Caco-2 (cell line): ENCODE measurements at regions of chr17 and their contacts with region 1.

Region 1: DNA sequence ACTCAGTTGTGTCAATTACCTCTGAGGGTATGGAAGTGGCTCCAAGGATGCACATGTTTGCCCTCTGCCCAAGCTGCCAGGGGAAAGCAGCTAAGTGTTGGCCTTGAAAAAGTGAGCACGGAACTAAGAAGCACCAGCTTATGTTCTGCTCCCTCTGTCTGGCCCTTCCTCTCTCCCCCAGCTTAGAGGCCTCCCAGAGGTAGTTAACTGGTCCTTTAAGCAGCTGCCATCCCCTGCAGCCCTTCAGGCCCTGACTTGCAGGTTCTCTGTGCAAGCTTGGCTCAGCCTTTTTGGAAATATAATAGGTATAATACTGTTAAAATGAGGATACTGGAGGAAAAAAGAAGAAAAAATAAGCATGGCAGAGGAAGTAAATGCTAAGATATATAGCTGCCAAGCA is 7.0 kb upstream of the UBE2Z start:
- DNase-seq: no peak
- H3K4me3 ChIP-seq: no peak overlapping the region
- H3K4me3 Mint-ChIP-seq: no peak overlapping the region
- H3K27ac Mint-ChIP-seq: no peak overlapping the region
- H3K4me1 ChIP-seq: peaks cover 3% of the 10 kb centered on the region
- H3K4me1 Mint-ChIP-seq: peaks cover 13% of the 10 kb centered on the region
- H3K27me3 ChIP-seq: no peaks in the 10 kb centered on the region
- H3K27me3 Mint-ChIP-seq: no peaks in the 10 kb centered on the region
- CTCF ChIP-seq: no peak

Region 2: GRCh38 chr17:48671697-48672171 is 229.5 kb before region 1 on chr17:
- CTCF ChIA-PET with region 1: interaction called, 10 read pairs
- POLR2A ChIA-PET with region 1: no interaction called
- intact Hi-C with region 1: no loop called
- DNase-seq: peak; percentile 86 to 94
- H3K4me3 ChIP-seq: peak overlapping the region; percentile 23
- H3K4me3 Mint-ChIP-seq: peak overlapping the region; percentile 58
- H3K27ac Mint-ChIP-seq: peak overlapping the region; percentile 11
- H3K4me1 ChIP-seq: no peaks in the 10 kb centered on the region
- H3K4me1 Mint-ChIP-seq: peaks cover 5% of the 10 kb centered on the region
- H3K27me3 ChIP-seq: no peaks in the 10 kb centered on the region
- H3K27me3 Mint-ChIP-seq: peaks cover 2% of the 10 kb centered on the region
- CTCF ChIP-seq: peak; percentile 99

Region 3: GRCh38 chr17:48928876-48929811 is 27.9 kb after region 1 on chr17:
- CTCF ChIA-PET with region 1: interaction called, 5 read pairs
- POLR2A ChIA-PET with region 1: interaction called, 14 read pairs
- intact Hi-C with region 1: no loop called
- DNase-seq: no peak
- H3K4me3 ChIP-seq: no peak overlapping the region
- H3K4me3 Mint-ChIP-seq: no peak overlapping the region
- H3K27ac Mint-ChIP-seq: no peak overlapping the region
- H3K4me1 ChIP-seq: no peaks in the 10 kb centered on the region
- H3K4me1 Mint-ChIP-seq: no peaks in the 10 kb centered on the region
- H3K27me3 ChIP-seq: no peaks in the 10 kb centered on the region
- H3K27me3 Mint-ChIP-seq: no peaks in the 10 kb centered on the region
- CTCF ChIP-seq: no peak

Region 4: DNA sequence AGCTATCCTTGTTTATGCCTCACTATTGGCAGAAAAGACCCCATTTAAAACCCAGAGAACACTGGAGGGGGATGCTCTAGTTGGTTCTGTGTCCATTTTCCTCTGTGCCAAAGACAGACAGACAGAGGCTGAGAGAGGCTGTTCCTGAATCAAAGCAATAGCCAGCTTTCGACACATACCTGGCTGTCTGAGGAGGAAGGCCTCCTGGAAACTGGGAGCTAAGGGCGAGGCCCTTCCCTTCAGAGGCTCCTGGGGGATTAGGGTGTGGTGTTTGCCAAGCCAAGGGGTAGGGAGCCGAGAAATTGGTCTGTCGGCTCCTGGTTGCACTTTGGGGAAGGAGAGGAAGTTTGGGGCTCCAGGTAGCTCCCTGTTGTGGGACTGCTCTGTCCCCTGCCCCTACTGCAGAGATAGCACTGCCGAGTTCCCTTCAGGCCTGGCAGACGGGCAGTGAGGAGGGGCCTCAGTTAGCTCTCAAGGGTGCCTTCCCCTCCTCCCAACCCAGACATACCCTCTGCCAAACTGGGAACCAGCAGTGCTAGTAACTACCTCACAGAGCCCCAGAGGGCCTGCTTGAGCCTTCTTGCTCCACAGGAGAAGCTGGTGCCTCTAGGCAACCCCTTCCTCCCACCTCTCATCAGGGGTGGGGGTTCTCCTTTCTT is 152.1 kb after region 1 on chr17:
- CTCF ChIA-PET with region 1: no interaction called
- POLR2A ChIA-PET with region 1: no interaction called
- intact Hi-C with region 1: no loop called
- DNase-seq: no peak
- H3K4me3 ChIP-seq: no peak overlapping the region
- H3K4me3 Mint-ChIP-seq: no peak overlapping the region
- H3K27ac Mint-ChIP-seq: peak overlapping the region; percentile 31
- H3K4me1 ChIP-seq: peaks cover 9% of the 10 kb centered on the region; the same call in 1 of the 2 replicates
- H3K4me1 Mint-ChIP-seq: peaks cover 14% of the 10 kb centered on the region
- H3K27me3 ChIP-seq: no peaks in the 10 kb centered on the region
- H3K27me3 Mint-ChIP-seq: no peaks in the 10 kb centered on the region
- CTCF ChIP-seq: no peak

Region 5: GRCh38 chr17:49136335-49136734 is 235.1 kb after region 1 on chr17:
- CTCF ChIA-PET with region 1: no interaction called
- POLR2A ChIA-PET with region 1: no interaction called
- intact Hi-C with region 1: no loop called
- DNase-seq: no peak
- H3K4me3 ChIP-seq: no peak overlapping the region
- H3K4me3 Mint-ChIP-seq: no peak overlapping the region
- H3K27ac Mint-ChIP-seq: no peak overlapping the region
- H3K4me1 ChIP-seq: peaks cover 6% of the 10 kb centered on the region; the same call in 1 of the 2 replicates
- H3K4me1 Mint-ChIP-seq: peaks cover 8% of the 10 kb centered on the region
- H3K27me3 ChIP-seq: peaks cover 2% of the 10 kb centered on the region; the same call in 1 of the 2 replicates
- H3K27me3 Mint-ChIP-seq: peaks cover 2% of the 10 kb centered on the region
- CTCF ChIP-seq: no peak